HepG2 (cell line): ENCODE measurements at regions of chr5 and their contacts with region 1.

Region 1: GRCh38 chr5:80093796-80094195 is 58.6 kb downstream of the THBS4 start:
- DNase-seq: peak; percentile 91
- ATAC-seq: peak; percentile 95
- H3K4me3 ChIP-seq: 0 out of 6 replicates have a peak overlapping the region, but pooled peaks of 1 of the 3 experiments have one; percentile 13
- H3K27ac ChIP-seq: peak overlapping the region; percentile 68
- H3K4me1 ChIP-seq: peaks cover 60% of the 10 kb centered on the region
- H3K27me3 ChIP-seq: 0 out of 5 replicates have a peak, but pooled peaks cover 0 to 2% of the 10 kb centered on the region in 2 experiments
- CTCF ChIP-seq: peak; percentile 48
- EP300 ChIP-seq: peak in 1 of 2 experiments; percentile 17; a peak in 1 of 4 replicates
- POLR2A ChIP-seq: no peak
- RAD21 ChIP-seq: peak; percentile 67

Region 2: GRCh38 chr5:80105698-80106439 is 12.1 kb after region 1 on chr5:
- CTCF ChIA-PET with region 1: no interaction called
- POLR2A ChIA-PET with region 1: interaction called, 13 read pairs
- in situ Hi-C with region 1: no loop called
- intact Hi-C with region 1: no loop called
- DNase-seq: peak; percentile 88
- ATAC-seq: peak; percentile 90
- H3K4me3 ChIP-seq: peak overlapping the region in 1 of 3 experiments; percentile 17; a peak in 1 of 6 replicates
- H3K27ac ChIP-seq: peak overlapping the region; percentile 30
- H3K4me1 ChIP-seq: peaks cover 45% of the 10 kb centered on the region
- H3K27me3 ChIP-seq: no peaks in the 10 kb centered on the region
- CTCF ChIP-seq: no peak
- EP300 ChIP-seq: peak in 1 of 2 experiments; percentile 75; a peak in 2 of 4 replicates
- POLR2A ChIP-seq: no peak
- RAD21 ChIP-seq: peak; percentile 8; the same call in 1 of the 2 replicates

Region 3: DNA sequence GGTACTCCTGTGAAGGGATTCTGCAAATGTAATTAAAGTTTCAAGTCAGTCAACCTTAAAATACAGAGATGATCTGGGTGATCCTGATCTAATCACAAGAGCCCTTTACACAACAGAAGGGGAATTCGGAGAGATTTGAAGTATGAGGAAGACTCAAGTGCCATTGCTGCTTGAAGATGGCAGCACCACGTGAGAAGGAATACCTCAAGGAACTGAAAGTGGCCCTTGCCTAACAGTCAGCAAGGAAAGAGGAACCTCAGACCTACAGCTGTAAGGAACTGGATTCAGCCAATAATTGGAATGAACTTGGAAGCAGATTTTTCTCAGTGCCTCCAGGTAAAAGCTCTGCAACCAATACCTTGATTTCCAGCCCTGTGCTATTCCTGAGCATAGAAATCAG is 28.8 kb after region 1 on chr5:
- CTCF ChIA-PET with region 1: no interaction called
- POLR2A ChIA-PET with region 1: no interaction called
- in situ Hi-C with region 1: no loop called
- intact Hi-C with region 1: no loop called
- DNase-seq: no peak
- ATAC-seq: no peak
- H3K4me3 ChIP-seq: no peak overlapping the region
- H3K27ac ChIP-seq: no peak overlapping the region
- H3K4me1 ChIP-seq: no peaks in the 10 kb centered on the region
- H3K27me3 ChIP-seq: no peaks in the 10 kb centered on the region
- CTCF ChIP-seq: no peak
- EP300 ChIP-seq: no peak
- POLR2A ChIP-seq: no peak
- RAD21 ChIP-seq: no peak

Region 4: GRCh38 chr5:80139466-80139972 is 45.7 kb after region 1 on chr5:
- CTCF ChIA-PET with region 1: no interaction called
- POLR2A ChIA-PET with region 1: no interaction called
- in situ Hi-C with region 1: no loop called
- intact Hi-C with region 1: no loop called
- DNase-seq: no peak
- ATAC-seq: no peak
- H3K4me3 ChIP-seq: no peak overlapping the region
- H3K27ac ChIP-seq: no peak overlapping the region
- H3K4me1 ChIP-seq: no peaks in the 10 kb centered on the region
- H3K27me3 ChIP-seq: no peaks in the 10 kb centered on the region
- CTCF ChIP-seq: no peak
- EP300 ChIP-seq: no peak
- POLR2A ChIP-seq: no peak
- RAD21 ChIP-seq: no peak

Region 5: GRCh38 chr5:80153586-80154126 is 59.9 kb after region 1 on chr5:
- CTCF ChIA-PET with region 1: no interaction called
- POLR2A ChIA-PET with region 1: no interaction called
- in situ Hi-C with region 1: no loop called
- intact Hi-C with region 1: loop called (anchors 5 kb)
- DNase-seq: peak; percentile 82
- ATAC-seq: peak; percentile 79
- H3K4me3 ChIP-seq: no peak overlapping the region
- H3K27ac ChIP-seq: peak overlapping the region; percentile 32
- H3K4me1 ChIP-seq: peaks cover 51% of the 10 kb centered on the region
- H3K27me3 ChIP-seq: no peaks in the 10 kb centered on the region
- CTCF ChIP-seq: no peak
- EP300 ChIP-seq: 0 out of 4 replicates have a peak, but pooled peaks of 1 of the 2 experiments have one; percentile 16
- POLR2A ChIP-seq: no peak
- RAD21 ChIP-seq: no peak

Region 6: DNA sequence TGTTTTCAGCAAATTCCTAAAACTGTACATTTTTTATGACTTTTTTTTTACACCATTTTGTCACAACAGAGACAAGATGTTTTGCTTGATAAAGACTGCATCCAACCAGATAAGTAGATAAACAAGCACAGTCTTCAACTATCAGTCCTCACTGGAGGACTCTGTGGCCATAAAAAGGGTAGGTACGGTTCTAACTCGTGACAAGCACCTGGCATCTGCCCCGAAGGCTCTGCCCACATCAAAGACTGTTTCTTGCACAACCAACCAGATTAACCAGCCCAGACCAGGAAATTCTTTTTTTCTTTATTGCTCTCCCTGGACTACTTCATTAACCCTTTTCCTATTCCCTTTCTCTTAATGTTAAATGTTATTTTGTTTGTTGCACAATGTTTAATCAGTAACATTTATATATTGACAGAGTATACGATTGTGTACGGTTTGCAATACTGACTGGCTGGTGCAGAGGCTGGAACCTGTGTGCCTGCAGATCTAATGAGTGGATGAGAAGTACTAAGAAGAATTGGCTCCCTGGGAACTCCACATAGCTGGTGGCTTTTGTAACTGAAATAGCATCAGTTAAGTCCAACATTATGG is 87.9 kb after region 1 on chr5:
- CTCF ChIA-PET with region 1: interaction called, 4 read pairs
- POLR2A ChIA-PET with region 1: interaction called, 5 read pairs
- in situ Hi-C with region 1: no loop called
- intact Hi-C with region 1: loop called (anchors 5 kb)
- DNase-seq: peak; percentile 90
- ATAC-seq: peak; percentile 39
- H3K4me3 ChIP-seq: no peak overlapping the region
- H3K27ac ChIP-seq: peak overlapping the region; percentile 83
- H3K4me1 ChIP-seq: peaks cover 61% of the 10 kb centered on the region
- H3K27me3 ChIP-seq: no peaks in the 10 kb centered on the region
- CTCF ChIP-seq: no peak
- EP300 ChIP-seq: peak in 1 of 2 experiments; percentile 87; a peak in 2 of 4 replicates
- POLR2A ChIP-seq: no peak
- RAD21 ChIP-seq: no peak

Region 7: DNA sequence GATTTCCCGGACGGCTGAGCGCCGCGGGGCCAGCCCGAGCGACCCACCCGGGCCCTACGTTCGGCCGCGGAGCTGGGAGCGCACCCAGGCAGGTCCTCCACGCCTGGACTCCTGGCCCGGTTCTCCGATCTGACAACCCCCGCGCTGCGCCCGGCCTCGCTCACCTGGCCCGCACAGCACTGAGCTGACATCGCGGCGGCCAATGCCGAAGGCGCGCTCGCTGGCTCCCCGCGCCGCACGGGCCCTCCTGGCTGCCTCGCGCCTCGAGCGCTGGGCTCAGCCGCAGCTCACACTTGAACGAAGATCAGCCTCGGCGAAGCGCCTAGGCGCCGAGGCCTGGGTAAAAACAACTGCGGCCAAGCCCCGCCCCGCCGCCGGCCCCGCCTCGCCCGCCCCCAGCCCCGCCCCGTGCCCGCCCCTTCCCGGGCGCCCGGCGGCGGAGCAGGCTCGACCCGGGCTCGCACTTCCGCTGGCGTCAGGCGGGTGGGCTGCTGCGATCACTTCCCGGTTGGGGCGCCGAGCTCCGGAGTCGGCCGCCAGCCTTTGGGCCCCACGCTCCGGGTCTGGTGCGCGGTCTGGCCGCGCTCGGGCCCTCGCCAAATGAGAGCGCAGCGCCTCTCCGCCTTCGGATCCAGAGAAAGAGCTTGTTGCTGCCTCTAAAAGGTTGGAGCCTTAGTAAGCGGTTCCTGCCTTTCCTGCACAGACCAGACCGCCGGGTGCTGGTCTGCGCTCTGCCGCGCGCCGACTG is 162.1 kb after region 1 on chr5 and contains the start of gene SERINC5:
- CTCF ChIA-PET with region 1: no interaction called
- POLR2A ChIA-PET with region 1: interaction called, 24 read pairs
- in situ Hi-C with region 1: loop called (anchors 5 kb)
- intact Hi-C with region 1: loop called (anchors 5 kb)
- DNase-seq: peak; percentile 53
- ATAC-seq: peak; percentile 77
- H3K4me3 ChIP-seq: peak within 1 kb of the TSS; percentile 80 to 97 (median 90)
- H3K27ac ChIP-seq: peak within 1 kb of the TSS; percentile 90
- H3K4me1 ChIP-seq: peaks cover 61% of the 10 kb centered on the region
- H3K27me3 ChIP-seq: no peaks in the 10 kb centered on the region; a peak in 1 of 5 replicates
- CTCF ChIP-seq: no peak
- EP300 ChIP-seq: 0 out of 4 replicates have a peak, but pooled peaks of 1 of the 2 experiments have one; percentile 8
- POLR2A ChIP-seq: peak; percentile 84 to 91
- RAD21 ChIP-seq: peak; percentile 12; the same call in 1 of the 2 replicates
- total RNA-seq, gene SERINC5: 22.8 and 23.1 TPM in 2 replicates

Region 8: GRCh38 chr5:80275347-80275746 is 181.6 kb after region 1 on chr5:
- CTCF ChIA-PET with region 1: interaction called, 22 read pairs
- POLR2A ChIA-PET with region 1: interaction called, 3 read pairs
- in situ Hi-C with region 1: no loop called
- intact Hi-C with region 1: loop called (anchors 1 kb)
- DNase-seq: peak; percentile 40
- ATAC-seq: peak; percentile 81
- H3K4me3 ChIP-seq: no peak overlapping the region
- H3K27ac ChIP-seq: no peak overlapping the region
- H3K4me1 ChIP-seq: 0 out of 2 replicates have a peak, but pooled peaks cover 5% of the 10 kb centered on the region
- H3K27me3 ChIP-seq: no peaks in the 10 kb centered on the region
- CTCF ChIP-seq: peak; percentile 81
- EP300 ChIP-seq: no peak
- POLR2A ChIP-seq: no peak
- RAD21 ChIP-seq: peak; percentile 65

Region 9: DNA sequence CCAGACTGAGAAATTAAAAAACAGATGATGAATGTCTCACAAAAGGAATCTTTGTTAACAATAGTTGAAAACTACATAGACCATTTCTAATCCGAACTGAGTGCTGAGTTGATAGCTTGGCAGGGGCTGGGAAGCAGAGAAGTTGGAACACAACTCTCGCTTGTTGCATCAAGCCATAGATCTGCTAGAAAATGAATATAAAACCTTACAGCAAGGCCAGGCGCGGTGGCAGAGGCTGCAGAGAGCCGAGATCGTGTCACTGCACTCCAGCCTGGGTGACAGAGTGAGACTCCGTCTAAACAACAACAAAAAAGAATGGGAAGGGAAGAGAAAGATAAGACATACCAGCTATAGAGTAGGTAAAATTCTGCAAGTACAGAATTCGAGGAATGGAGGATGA is 198.0 kb after region 1 on chr5:
- CTCF ChIA-PET with region 1: no interaction called
- POLR2A ChIA-PET with region 1: no interaction called
- in situ Hi-C with region 1: no loop called
- intact Hi-C with region 1: no loop called
- DNase-seq: no peak
- ATAC-seq: no peak
- H3K4me3 ChIP-seq: no peak overlapping the region
- H3K27ac ChIP-seq: no peak overlapping the region
- H3K4me1 ChIP-seq: no peaks in the 10 kb centered on the region
- H3K27me3 ChIP-seq: peaks cover 2 to 7% of the 10 kb centered on the region in 2 experiments; a peak in 2 of 5 replicates
- CTCF ChIP-seq: no peak
- EP300 ChIP-seq: no peak
- POLR2A ChIP-seq: no peak
- RAD21 ChIP-seq: no peak

Region 10: GRCh38 chr5:80308526-80308925 is 214.7 kb after region 1 on chr5:
- CTCF ChIA-PET with region 1: interaction called, 12 read pairs
- POLR2A ChIA-PET with region 1: interaction called, 9 read pairs
- in situ Hi-C with region 1: no loop called
- intact Hi-C with region 1: loop called (anchors 1 kb)
- DNase-seq: no peak
- ATAC-seq: no peak
- H3K4me3 ChIP-seq: no peak overlapping the region
- H3K27ac ChIP-seq: no peak overlapping the region
- H3K4me1 ChIP-seq: peaks cover 8% of the 10 kb centered on the region; the same call in 1 of the 2 replicates
- H3K27me3 ChIP-seq: no peaks in the 10 kb centered on the region; a peak in 1 of 5 replicates
- CTCF ChIP-seq: no peak
- EP300 ChIP-seq: no peak
- POLR2A ChIP-seq: no peak
- RAD21 ChIP-seq: no peak